Psoas muscle (tissue), 8 donors: ENCODE measurements at regions of chr17 and their contacts with region 1.

Region 1: DNA sequence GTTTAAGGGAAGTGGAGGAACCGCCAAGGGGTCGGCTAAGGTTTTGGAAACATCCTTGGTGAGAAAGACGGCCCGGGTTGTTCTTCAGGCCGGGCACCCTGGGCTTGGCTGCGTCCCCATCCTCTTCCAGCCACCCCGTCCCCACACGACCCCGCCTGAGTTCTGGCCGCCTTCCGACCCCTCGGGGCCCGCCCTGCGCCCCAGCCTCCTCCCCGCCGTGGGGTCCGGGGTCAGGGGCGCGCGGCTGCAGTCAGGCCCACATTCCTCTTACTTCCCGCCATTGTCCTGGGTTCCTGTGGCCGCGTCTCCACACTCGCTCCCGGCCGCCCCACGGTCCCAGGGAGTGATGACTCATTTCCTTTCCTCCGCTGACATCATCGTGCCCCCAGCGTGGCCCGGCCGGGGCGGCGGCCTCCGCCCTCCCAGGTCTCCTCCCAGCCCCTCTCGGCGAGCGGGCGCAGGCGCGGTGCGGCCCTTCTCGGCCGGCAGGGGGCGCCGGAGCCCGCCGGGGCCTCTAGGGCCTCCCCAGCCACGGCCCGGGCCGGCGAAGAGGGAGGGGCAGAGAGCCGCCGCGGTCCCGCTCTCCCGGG is 59.6 kb downstream of the WSB1 start:
- DNase-seq: peak; percentile 92 to 96
- ATAC-seq: peak; percentile 94 to 97 (median 95)
- H3K4me3 ChIP-seq: peak overlapping the region; percentile 73
- H3K27ac ChIP-seq: peak overlapping the region; percentile 87
- H3K4me1 ChIP-seq: peaks cover 6% of the 10 kb centered on the region
- H3K27me3 ChIP-seq: no peaks in the 10 kb centered on the region
- CTCF ChIP-seq: peak; percentile 95

Region 2: GRCh38 chr17:27236717-27237315 is 116.7 kb before region 1 on chr17:
- intact Hi-C with region 1: loop called (anchors 1 to 5 kb)
- DNase-seq: peak; percentile 57 to 67
- ATAC-seq: peak; percentile 85 to 90 (median 88)
- H3K4me3 ChIP-seq: no peak overlapping the region
- H3K27ac ChIP-seq: no peak overlapping the region
- H3K4me1 ChIP-seq: no peaks in the 10 kb centered on the region
- H3K27me3 ChIP-seq: no peaks in the 10 kb centered on the region
- CTCF ChIP-seq: peak; percentile 99

Region 3: DNA sequence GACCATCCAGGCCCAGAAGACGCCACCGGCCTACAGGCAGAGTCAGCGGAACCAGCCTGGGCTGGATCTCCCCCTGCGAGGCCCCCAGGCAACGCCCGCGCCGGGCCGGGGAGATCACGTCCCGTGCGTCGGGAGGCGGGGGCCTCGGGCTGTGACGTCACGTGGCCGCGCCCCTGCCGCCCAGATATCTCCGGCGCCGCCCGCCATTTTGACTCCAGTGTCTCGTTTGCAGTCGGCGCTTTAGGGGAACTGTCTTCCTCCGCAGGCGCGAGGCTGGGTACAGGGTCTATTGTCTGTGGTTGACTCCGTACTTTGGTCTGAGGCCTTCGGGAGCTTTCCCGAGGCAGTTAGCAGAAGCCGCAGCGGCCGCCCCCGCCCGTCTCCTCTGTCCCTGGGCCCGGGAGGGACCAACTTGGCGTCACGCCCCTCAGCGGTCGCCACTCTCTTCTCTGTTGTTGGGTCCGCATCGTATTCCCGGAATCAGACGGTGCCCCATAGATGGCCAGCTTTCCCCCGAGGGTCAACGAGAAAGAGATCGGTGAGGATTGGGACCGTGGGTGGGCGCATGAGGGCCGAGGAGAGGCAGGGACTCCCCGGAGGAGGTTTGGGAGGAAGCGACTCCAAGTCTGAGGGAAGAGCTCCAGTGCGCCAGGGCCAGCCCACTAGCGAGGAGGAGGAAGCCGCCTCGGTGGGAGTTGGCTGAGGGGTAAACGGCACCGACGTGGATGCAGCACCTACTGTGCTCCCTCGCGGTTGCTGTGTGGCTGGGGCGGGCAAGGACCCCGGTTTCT is 59.5 kb before region 1 on chr17 and contains the start of gene WSB1:
- intact Hi-C with region 1: loop called (anchors 1 to 10 kb)
- DNase-seq: peak; percentile 93 to 96
- ATAC-seq: peak; percentile 96 to 97 (median 97)
- H3K4me3 ChIP-seq: peak within 1 kb of the TSS; percentile 90
- H3K27ac ChIP-seq: peak within 1 kb of the TSS; percentile 96
- H3K4me1 ChIP-seq: peaks cover 29% of the 10 kb centered on the region
- H3K27me3 ChIP-seq: no peaks in the 10 kb centered on the region
- CTCF ChIP-seq: no peak
- total RNA-seq, gene WSB1: 35.3 to 42.8 (median 39.5) TPM

Region 4: DNA sequence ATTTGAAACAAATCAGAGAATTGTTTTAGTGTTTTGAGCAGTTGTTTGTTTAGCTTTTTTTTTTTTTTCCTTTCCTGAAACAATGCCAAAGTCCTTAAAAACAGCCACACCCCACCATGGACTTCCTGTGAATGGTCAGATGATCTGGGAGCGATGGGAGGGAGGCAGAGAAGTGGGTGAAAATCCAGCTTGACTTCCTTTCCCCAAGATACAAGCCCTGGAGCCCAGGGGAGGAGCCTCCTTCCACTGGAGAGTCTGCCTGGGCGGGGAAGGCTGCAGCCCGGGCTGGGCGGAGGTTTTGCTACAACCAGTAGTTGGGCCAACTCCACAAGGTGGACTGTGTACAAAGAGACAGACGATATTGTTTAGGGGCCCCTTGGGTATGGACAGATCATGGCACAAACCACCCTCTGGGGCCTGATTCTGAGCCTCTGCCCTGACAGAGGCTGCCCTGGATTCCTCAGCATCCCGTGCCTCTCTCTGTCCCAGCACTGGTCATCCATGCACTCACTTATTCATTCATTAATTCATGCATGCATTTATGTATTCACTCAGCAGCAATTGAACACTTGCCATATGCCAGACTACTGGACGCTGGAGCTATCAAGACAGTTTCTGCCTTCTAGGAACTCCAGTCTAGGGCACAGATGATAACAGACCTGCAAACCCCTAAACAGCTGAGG is 29.9 kb before region 1 on chr17:
- intact Hi-C with region 1: no loop called
- DNase-seq: peak; percentile 68 to 85
- ATAC-seq: peak in 1 of 4 donors; percentile 20
- H3K4me3 ChIP-seq: no peak overlapping the region
- H3K27ac ChIP-seq: no peak overlapping the region
- H3K4me1 ChIP-seq: peaks cover 20% of the 10 kb centered on the region
- H3K27me3 ChIP-seq: no peaks in the 10 kb centered on the region
- CTCF ChIP-seq: no peak

Region 5: GRCh38 chr17:27455914-27456680 is 102.5 kb after region 1 on chr17 and contains the start of gene KSR1:
- intact Hi-C with region 1: loop called (anchors 5 to 10 kb)
- DNase-seq: peak; percentile 85 to 87
- ATAC-seq: peak; percentile 94 to 96 (median 96)
- H3K4me3 ChIP-seq: peak within 1 kb of the TSS; percentile 87
- H3K27ac ChIP-seq: peak within 1 kb of the TSS; percentile 74
- H3K4me1 ChIP-seq: peaks cover 7% of the 10 kb centered on the region
- H3K27me3 ChIP-seq: no peaks in the 10 kb centered on the region
- CTCF ChIP-seq: peak; percentile 14
- total RNA-seq, gene KSR1: 46.5 to 93.0 (median 70.7) TPM

Region 6: DNA sequence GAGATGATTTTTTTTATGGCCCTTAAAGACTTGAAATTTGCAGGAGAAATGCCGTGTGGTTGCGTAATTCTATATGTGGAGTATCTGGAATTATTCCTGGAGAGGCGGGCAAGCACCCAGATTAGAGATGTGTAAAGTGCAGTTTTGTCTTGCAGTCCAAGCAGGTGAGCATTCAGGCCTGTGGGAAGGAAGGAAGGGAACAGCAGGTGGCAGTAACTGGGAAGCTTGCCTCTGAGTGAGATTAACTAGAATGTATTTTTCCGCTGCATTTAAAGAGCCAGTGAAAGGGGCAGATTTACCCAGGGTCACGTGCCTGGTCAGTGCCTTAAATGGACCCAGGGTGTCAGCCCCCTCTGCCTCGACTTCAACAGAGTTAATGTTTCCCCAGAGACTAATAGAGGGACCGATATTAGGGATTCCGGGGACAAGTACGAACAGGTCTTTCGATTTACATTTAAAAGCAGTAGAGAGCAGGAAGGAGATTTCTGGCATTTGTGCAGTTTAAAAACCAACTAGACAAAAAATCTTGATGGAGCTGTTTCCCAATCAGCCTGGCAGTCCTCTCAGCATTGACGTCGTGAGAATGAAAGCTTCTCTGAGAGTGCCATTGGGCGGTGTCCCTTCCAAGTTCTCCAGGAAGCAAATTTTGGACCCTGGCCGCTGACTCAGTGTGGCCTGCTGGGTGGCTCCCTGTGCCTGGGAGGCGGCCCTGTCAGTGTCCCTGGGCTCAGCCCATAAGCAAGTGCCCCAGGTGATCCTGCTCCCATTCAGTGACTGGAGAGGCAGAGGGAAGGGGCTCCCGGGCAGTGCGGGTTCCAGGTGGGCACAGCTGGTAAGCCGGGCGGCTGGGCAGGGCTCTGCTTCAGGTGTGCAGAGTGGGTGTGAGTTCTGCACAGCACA is 140.9 kb after region 1 on chr17:
- intact Hi-C with region 1: loop called (anchors 5 to 10 kb)
- DNase-seq: peak; percentile 82 to 87
- ATAC-seq: peak; percentile 79 to 90 (median 88)
- H3K4me3 ChIP-seq: peak overlapping the region; percentile 55
- H3K27ac ChIP-seq: peak overlapping the region; percentile 79
- H3K4me1 ChIP-seq: peaks cover 20% of the 10 kb centered on the region
- H3K27me3 ChIP-seq: no peaks in the 10 kb centered on the region
- CTCF ChIP-seq: peak; percentile 61

Region 7: DNA sequence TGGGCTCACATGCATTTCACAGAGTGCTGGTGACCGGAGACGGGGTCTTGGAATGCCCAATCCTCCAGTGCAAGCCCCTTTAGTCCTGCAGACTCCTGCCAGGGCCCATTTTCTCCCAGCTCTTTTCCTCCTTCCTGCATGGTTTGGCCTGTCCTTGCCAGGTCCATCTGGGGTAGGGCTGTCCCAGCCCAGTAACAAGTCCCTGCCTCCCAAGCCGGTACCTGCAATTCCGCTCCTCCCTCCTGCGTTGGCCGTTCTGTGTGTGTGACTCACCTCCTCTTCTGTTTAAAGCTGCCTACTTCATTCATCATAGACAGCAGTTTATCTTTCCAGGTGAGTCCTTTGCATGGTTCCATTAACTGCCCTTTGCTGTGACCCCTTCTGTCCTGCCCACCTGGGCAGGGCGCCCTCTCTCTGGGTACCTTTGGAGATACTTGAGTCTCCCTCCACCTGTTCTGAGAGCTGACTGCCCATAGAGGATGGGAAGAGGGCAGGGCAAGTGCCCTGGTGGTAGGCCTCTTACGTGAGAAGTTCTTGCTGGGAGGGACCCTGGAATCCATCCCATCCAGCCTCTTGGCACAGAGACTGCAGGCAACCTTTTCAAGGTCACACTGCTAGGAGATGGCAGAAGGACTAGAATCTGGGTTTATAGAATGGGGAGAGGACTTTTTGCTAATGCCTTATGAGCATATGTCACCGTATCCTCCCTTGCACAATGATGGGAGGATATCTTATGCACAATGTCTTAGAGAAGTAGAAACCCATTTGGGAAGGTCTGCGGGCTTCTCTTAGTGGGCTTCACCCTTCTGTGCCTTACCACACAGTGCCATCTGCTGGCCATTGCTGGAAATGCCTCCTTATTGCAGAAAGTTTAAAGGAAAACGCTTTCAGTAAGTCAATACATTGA is 247.8 kb after region 1 on chr17:
- intact Hi-C with region 1: loop called (anchors 1 to 2 kb)
- DNase-seq: peak; percentile 66 to 81
- ATAC-seq: peak; percentile 59 to 76 (median 60)
- H3K4me3 ChIP-seq: no peak overlapping the region
- H3K27ac ChIP-seq: peak overlapping the region; percentile 7
- H3K4me1 ChIP-seq: no peaks in the 10 kb centered on the region
- H3K27me3 ChIP-seq: no peaks in the 10 kb centered on the region
- CTCF ChIP-seq: peak; percentile 96

Region 8: GRCh38 chr17:27654654-27655524 is 301.3 kb after region 1 on chr17:
- intact Hi-C with region 1: loop called (anchors 2 to 5 kb)
- DNase-seq: peak; percentile 69 to 81
- ATAC-seq: peak; percentile 42 to 67 (median 63)
- H3K4me3 ChIP-seq: no peak overlapping the region
- H3K27ac ChIP-seq: no peak overlapping the region
- H3K4me1 ChIP-seq: no peaks in the 10 kb centered on the region
- H3K27me3 ChIP-seq: no peaks in the 10 kb centered on the region
- CTCF ChIP-seq: peak; percentile 92